Activated CD8-positive, alpha-beta T cell treated with anti-CD3 and anti-CD28 coated beads, Interleukin-2, amount 10 ng/mL, durations not matched to agents 7 days and 5 days (primary cell): ENCODE measurements at regions of chr5 and their contacts with region 1.

Region 1: GRCh38 chr5:144191998-144192397 is 21.3 kb downstream of the KCTD16 start:
- DNase-seq: peak; percentile 67
- ATAC-seq: peak; percentile 72
- H3K4me3 Mint-ChIP-seq: no peak overlapping the region
- H3K27ac Mint-ChIP-seq: no peak overlapping the region
- H3K4me1 Mint-ChIP-seq: peaks cover 47% of the 10 kb centered on the region
- H3K27me3 Mint-ChIP-seq: no peaks in the 10 kb centered on the region

Region 2: DNA sequence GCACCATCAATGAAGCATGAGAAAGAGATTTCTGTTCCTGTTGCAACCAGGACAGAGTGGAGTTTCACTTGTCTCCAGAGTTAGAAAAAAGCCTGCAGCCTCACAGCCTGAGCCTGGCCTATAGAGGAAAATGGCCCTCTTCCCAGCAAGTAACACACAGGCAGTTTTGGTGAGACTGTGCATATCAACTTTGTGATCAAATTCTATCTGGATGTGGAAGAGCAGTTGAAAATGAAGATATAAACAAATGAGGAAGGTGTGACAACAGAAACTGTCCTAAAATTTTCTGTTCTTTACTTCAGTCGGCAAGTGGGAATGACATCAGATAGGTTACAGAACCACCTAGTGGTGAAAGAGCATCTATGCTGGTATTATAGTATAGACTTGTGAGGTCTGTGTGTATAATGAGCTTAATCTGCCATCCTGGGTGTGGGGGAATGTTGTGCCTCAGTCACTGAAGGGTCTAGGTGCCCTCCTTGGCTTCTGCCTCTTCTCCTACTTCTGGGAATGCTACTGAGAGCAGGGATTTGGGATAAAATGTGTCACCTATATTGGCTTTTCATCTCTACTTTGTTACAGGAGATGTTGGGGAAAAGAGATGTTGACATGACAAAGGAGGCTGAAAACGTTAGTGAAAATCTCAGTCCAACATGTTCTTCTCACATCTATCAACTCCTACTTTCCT is 49.7 kb before region 1 on chr5:
- CTCF ChIA-PET with region 1: interaction called, 17 read pairs
- POLR2A ChIA-PET with region 1: no interaction called
- DNase-seq: no peak
- ATAC-seq: peak; percentile 80
- H3K4me3 Mint-ChIP-seq: no peak overlapping the region
- H3K27ac Mint-ChIP-seq: no peak overlapping the region
- H3K4me1 Mint-ChIP-seq: peaks cover 2% of the 10 kb centered on the region
- H3K27me3 Mint-ChIP-seq: peaks cover 15% of the 10 kb centered on the region

Region 3: DNA sequence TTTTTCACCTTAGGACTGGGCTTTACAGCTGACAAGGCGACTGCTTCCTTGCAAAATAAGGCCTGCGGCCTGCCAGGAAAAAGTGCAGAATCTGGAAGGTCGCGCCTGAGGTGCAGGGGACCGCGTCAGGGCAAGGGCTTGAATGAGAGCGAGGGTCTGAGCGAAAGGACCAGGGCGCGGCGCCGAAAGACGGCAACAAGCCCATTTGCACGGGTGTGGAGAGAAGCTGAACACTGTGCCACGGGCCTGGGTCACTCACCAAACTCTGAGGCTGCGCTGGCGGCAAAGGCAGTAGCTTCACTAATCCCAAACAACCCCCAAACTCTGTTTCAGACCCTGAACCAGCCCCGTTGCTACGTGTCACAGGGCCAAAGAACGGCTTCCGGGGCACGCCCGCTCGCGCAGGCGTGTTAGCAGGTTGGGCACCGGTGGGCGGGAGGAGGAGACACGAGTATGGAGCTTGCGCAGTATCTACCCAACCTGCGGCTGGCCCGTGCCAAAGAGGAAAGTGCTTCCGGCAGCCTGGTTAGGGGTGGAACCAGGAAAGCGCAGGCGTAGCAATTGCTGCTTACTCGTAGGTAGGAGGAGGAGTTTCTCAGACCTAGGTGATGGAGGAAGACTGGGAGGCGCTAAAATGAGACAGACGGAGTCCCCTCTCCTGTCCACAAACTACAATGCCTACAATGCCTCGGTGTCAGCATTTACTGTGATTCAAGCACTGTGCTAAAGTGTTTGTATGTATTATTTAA is 21.5 kb before region 1 on chr5 and contains the starts of genes KCTD16 and YIPF5:
- CTCF ChIA-PET with region 1: interaction called, 129 read pairs
- POLR2A ChIA-PET with region 1: interaction called, 30 read pairs
- DNase-seq: peak; percentile 98
- ATAC-seq: peak; percentile 100
- H3K4me3 Mint-ChIP-seq: peak within 1 kb of the TSS; percentile 93
- H3K27ac Mint-ChIP-seq: peak within 1 kb of the TSS; percentile 88
- H3K4me1 Mint-ChIP-seq: peaks cover 37% of the 10 kb centered on the region
- H3K27me3 Mint-ChIP-seq: peaks cover 8% of the 10 kb centered on the region
- total RNA-seq, gene KCTD16: 0.08 TPM in 1 of 2 experiments, not detected in the other
- total RNA-seq, gene YIPF5: 35.2 to 38.1 TPM

Region 4: DNA sequence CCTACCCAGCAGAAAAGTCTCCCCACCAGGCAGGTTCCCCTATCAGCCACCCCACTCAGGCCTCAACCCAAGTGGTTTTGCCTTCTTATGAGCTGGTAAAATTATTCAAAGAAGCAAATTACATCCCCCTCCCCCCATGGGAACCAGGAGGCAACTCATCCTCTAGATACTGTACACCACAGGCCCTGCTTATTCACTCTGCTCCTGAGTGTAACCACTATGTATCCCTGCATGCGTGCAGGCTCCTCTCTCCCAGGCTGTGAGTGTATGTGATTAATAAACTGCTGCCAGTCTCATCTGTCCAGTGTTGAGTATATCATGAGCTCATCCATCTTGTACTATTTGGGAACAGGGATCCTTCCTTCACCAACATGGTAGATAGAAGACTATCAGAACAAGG is 12.8 kb before region 1 on chr5:
- CTCF ChIA-PET with region 1: interaction called, 129 read pairs
- POLR2A ChIA-PET with region 1: no interaction called
- DNase-seq: no peak
- ATAC-seq: no peak
- H3K4me3 Mint-ChIP-seq: no peak overlapping the region
- H3K27ac Mint-ChIP-seq: no peak overlapping the region
- H3K4me1 Mint-ChIP-seq: peaks cover 17% of the 10 kb centered on the region
- H3K27me3 Mint-ChIP-seq: peaks cover 2% of the 10 kb centered on the region

Region 5: DNA sequence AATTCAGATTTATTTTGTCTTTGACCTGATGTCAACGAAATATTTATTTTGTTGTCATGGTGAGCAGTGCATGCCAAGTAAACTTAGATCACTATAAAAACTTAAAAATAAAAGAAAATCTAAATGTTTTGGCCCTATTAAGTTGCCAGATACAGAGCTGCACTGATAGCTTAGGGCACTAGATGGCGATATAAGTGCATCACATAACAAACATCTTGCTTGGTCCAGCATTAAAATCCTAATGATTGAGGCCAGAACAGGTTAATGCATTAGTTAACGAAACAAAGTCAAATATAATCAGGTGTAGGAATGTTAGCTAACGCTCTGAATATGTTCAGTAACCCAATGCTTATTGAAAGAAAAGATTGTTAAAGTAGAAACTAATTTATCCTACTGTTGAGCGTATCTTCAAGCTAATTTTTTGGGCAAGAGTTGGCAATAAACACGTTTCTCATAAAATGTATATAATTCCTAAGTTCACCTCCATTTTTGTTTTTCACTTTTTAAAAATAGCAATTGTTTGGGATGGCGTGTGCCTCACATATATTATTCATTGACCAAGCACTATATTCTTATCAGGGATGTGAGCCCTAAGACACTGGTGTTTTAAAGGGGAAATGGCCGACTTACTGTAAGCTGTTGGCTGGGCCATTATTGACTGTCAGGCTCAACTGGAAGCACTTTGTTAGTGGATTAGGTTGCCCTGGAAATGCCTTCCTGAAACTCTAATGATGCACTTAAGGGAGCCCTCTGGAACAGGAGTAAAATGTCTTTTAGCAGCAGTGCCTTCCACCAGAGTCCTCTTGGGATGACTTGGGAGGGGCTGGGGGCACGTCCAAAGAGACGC is 12.0 kb after region 1 on chr5:
- CTCF ChIA-PET with region 1: interaction called, 39 read pairs
- POLR2A ChIA-PET with region 1: no interaction called
- DNase-seq: peak; percentile 56
- ATAC-seq: peak; percentile 72
- H3K4me3 Mint-ChIP-seq: no peak overlapping the region
- H3K27ac Mint-ChIP-seq: no peak overlapping the region
- H3K4me1 Mint-ChIP-seq: no peaks in the 10 kb centered on the region
- H3K27me3 Mint-ChIP-seq: peaks cover 55% of the 10 kb centered on the region